Activated CD8-positive, alpha-beta T cell treated with anti-CD3 and anti-CD28 coated beads for 36 hours (primary cell): ENCODE measurements at regions of chr22 and their contacts with region 1.

Region 1: GRCh38 chr22:25110846-25111578 is 88.6 kb upstream of the CRYBB3 start:
- DNase-seq: peak; percentile 68
- ATAC-seq: peak; percentile 76
- H3K4me3 Mint-ChIP-seq: peak overlapping the region; percentile 78
- H3K27ac Mint-ChIP-seq: peak overlapping the region; percentile 55
- H3K4me1 Mint-ChIP-seq: peaks cover 29% of the 10 kb centered on the region
- H3K27me3 Mint-ChIP-seq: no peaks in the 10 kb centered on the region
- CTCF ChIP-seq: peak; percentile 72

Region 2: GRCh38 chr22:24977370-24978221 is 133.4 kb before region 1 on chr22:
- CTCF ChIA-PET with region 1: no interaction called
- POLR2A ChIA-PET with region 1: no interaction called
- intact Hi-C with region 1: no loop called
- DNase-seq: no peak
- ATAC-seq: no peak
- H3K4me3 Mint-ChIP-seq: no peak overlapping the region
- H3K27ac Mint-ChIP-seq: no peak overlapping the region
- H3K4me1 Mint-ChIP-seq: no peaks in the 10 kb centered on the region
- H3K27me3 Mint-ChIP-seq: peaks cover 2% of the 10 kb centered on the region
- CTCF ChIP-seq: no peak

Region 3: DNA sequence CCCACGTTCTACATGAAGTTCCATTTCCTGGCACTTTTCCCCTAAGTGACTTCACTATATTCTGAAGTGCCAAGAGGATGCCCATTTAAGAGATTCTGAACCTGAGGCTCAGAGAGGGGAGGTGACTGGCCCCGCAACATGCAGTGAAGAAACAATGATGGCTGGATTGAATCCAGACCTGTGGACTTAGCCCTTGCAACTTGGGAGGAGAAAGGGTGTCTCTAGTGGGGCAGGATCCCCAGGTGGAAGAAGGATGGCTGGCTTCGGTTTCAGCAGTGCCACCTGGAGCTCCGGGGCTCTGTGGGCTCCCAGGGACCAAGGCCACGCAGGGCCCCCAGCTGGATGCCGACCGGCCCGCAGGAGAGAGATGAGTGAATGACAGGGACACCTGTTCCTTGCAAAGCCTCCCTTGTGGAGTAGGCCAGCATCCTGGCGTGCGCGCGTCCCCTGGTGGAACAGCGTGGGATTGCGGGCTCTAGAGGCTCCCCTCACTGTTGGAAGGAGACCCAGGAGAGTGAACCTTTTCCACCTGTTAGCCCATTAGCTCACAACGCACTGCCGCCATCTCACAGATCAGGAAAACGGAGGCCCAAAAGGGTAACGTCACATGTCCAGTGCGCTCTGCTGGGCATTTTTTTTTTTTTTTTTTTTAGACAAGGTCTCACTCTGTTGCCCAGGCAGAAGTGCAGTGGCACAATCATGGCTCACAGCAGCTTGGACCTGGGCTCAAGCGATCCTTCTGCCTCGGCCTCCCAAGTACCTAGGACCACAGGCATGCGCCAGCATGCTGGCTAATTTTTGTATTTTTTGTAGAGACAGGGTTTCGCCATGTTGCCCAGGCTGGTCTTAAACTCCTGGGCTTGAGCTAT is 53.8 kb before region 1 on chr22:
- CTCF ChIA-PET with region 1: interaction called, 21 read pairs
- POLR2A ChIA-PET with region 1: interaction called, 3 read pairs
- intact Hi-C with region 1: no loop called
- DNase-seq: peak; percentile 88
- ATAC-seq: peak; percentile 62
- H3K4me3 Mint-ChIP-seq: no peak overlapping the region
- H3K27ac Mint-ChIP-seq: no peak overlapping the region
- H3K4me1 Mint-ChIP-seq: peaks cover 62% of the 10 kb centered on the region
- H3K27me3 Mint-ChIP-seq: no peaks in the 10 kb centered on the region
- CTCF ChIP-seq: peak; percentile 86

Region 4: DNA sequence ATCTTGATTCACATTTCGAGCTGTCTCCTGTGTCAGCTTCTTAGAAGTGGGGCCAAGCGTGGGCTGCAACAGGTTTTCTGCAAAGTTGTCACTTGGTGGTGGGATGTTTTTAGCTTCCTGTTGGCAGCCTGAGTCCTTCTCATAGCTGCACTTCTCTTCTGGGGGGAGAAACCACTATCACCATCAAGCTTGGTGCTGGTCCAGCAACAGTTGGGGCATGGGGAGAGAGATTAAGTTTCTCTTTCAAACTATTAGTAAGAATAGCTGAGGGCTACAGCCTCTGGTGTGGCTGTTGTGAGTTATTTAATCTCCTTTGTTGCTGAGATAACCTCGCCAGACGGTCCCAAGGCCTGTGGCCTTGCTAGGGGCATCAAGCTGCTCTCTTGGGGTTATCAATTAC is 34.7 kb before region 1 on chr22:
- CTCF ChIA-PET with region 1: interaction called, 33 read pairs
- POLR2A ChIA-PET with region 1: interaction called, 11 read pairs
- intact Hi-C with region 1: no loop called
- DNase-seq: peak; percentile 93
- ATAC-seq: peak; percentile 79
- H3K4me3 Mint-ChIP-seq: peak overlapping the region; percentile 43
- H3K27ac Mint-ChIP-seq: peak overlapping the region; percentile 83
- H3K4me1 Mint-ChIP-seq: peaks cover 82% of the 10 kb centered on the region
- H3K27me3 Mint-ChIP-seq: no peaks in the 10 kb centered on the region
- CTCF ChIP-seq: no peak

Region 5: DNA sequence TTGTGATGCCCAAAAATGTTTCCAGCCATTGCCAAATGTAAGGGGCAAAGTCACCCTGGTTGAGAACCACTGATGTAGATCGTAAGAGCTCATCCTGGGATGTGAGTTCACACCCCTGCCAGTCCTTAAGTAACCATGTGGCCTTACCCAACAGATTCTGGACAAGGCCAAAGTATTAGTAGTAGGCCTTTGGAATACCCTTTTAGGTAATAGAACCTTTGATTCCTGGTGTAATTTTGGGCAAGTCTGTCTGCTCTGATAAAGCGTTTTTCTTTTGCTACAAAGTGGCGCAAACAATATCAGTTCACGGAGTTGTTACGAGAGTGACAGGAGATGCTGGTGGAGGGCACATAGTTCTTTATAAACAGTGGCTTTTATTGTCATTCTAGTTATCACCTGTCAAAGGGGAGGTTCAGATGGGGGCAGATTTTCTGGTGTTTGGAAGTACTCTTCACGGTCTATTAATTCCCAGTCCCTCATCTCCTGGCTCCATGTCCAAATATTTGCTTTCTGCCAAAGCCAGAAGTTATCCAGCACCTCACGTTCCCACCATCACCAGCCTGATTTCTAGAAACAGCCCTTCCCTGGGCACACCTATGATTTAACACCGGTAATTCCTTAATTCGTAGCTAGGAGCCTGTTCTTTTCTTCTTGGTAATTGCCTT is 14.8 kb after region 1 on chr22:
- CTCF ChIA-PET with region 1: interaction called, 15 read pairs
- POLR2A ChIA-PET with region 1: no interaction called
- intact Hi-C with region 1: no loop called
- DNase-seq: no peak
- ATAC-seq: no peak
- H3K4me3 Mint-ChIP-seq: no peak overlapping the region
- H3K27ac Mint-ChIP-seq: no peak overlapping the region
- H3K4me1 Mint-ChIP-seq: no peaks in the 10 kb centered on the region
- H3K27me3 Mint-ChIP-seq: no peaks in the 10 kb centered on the region
- CTCF ChIP-seq: no peak